H1 (cell line): ENCODE measurements at regions of chr13 and their contacts with region 1.

Region 1: DNA sequence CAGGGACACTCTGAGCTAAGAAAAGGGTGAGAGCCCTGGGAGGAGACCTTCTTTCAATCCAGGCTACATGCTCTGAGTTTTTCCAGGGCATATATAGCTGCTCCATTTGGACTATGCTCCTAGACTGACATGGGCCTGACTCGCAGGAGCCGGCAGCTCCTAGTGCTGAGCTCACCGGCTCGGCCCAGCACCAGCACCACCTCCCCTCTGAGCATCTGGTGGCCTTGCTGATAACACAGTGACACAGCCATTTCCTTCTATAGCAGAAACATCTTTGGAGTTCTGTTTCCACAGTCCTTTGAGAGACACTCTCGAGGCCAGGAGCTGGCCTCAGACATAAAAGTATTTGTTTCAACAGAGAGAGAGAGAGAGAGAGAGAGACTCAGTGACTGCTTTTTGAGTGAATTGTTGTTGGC is 184.9 kb downstream of the TM9SF2 start:
- DNase-seq: peak in 1 of 2 experiments; percentile 52
- H3K4me3 ChIP-seq: peak overlapping the region in 1 of 4 experiments; percentile 28; a peak in 1 of 8 replicates
- H3K27ac ChIP-seq: peak overlapping the region; percentile 56; the same call in 1 of the 2 replicates
- H3K4me1 ChIP-seq: peaks cover 17 to 41% (median 35%) of the 10 kb centered on the region in 4 experiments
- H3K27me3 ChIP-seq: no peaks in the 10 kb centered on the region
- CTCF ChIP-seq: no peak
- EP300 ChIP-seq: no peak
- POLR2A ChIP-seq: no peak
- RAD21 ChIP-seq: no peak

Region 2: DNA sequence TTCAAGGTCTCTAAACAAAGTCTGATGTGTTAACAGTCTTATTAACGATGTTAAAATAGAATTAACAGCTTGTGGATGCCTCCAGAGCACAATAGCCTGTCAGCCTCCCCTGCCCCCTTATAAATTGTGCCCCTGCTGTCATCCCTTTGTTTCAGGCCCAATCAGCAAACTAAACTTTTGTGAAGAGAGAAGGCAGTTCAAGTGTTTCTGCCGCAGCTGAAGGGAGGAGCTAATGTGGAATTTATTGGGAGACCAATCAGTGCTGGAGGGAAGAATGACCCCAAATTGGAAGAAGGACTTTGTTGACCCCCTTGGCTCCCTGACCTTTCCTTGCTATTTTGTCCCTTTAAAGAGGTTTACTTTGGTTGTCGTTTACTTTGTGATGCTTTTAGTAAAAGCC is 24.4 kb before region 1 on chr13:
- CTCF ChIA-PET with region 1: interaction called, 10 read pairs
- POLR2A ChIA-PET with region 1: interaction called, 63 read pairs
- DNase-seq: peak; percentile 67 to 75
- H3K4me3 ChIP-seq: peak overlapping the region in 1 of 4 experiments; percentile 31; a peak in 1 of 8 replicates
- H3K27ac ChIP-seq: no peak overlapping the region
- H3K4me1 ChIP-seq: peaks cover 17 to 36% (median 25%) of the 10 kb centered on the region in 4 experiments
- H3K27me3 ChIP-seq: no peaks in the 10 kb centered on the region
- CTCF ChIP-seq: no peak
- EP300 ChIP-seq: no peak
- POLR2A ChIP-seq: peak in 1 of 2 experiments; percentile 54; a peak in 2 of 3 replicates
- RAD21 ChIP-seq: peak; percentile 11 to 16; a peak in 2 of 4 replicates

Region 3: GRCh38 chr13:99702687-99703319 is 16.6 kb after region 1 on chr13:
- CTCF ChIA-PET with region 1: interaction called, 11 read pairs
- POLR2A ChIA-PET with region 1: interaction called, 229 read pairs
- DNase-seq: no peak
- H3K4me3 ChIP-seq: no peak overlapping the region
- H3K27ac ChIP-seq: peak overlapping the region; percentile 31; the same call in 1 of the 2 replicates
- H3K4me1 ChIP-seq: peaks cover 6 to 37% (median 14%) of the 10 kb centered on the region in 4 experiments
- H3K27me3 ChIP-seq: no peaks in the 10 kb centered on the region
- CTCF ChIP-seq: peak; percentile 25 to 42 (median 26); a peak in 3 of 4 replicates
- EP300 ChIP-seq: no peak
- POLR2A ChIP-seq: no peak
- RAD21 ChIP-seq: peak; percentile 52; a peak in 3 of 4 replicates

Region 4: DNA sequence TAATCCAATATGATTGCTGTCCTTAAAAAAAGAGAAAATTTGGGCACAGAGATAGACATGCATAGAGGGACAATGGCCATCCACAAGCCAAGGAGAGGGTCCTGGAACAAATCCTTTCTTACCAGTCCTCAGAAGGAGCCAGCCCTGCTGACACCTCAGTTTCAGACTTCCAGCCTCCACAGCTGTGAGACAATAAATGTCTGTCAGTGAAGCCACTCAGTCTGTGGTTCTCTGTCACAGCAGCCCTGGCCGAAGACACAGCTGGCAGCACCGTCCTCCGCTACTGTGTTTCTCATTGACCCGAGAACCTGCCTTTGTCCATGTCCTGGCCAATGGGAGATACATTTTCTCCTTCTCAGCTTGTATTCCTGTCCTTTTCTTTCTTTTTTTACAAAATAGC is 23.0 kb after region 1 on chr13:
- CTCF ChIA-PET with region 1: interaction called, 4 read pairs
- POLR2A ChIA-PET with region 1: interaction called, 229 read pairs
- DNase-seq: no peak
- H3K4me3 ChIP-seq: no peak overlapping the region
- H3K27ac ChIP-seq: no peak overlapping the region
- H3K4me1 ChIP-seq: peaks cover 4 to 26% (median 10%) of the 10 kb centered on the region in 4 experiments
- H3K27me3 ChIP-seq: no peaks in the 10 kb centered on the region
- CTCF ChIP-seq: no peak
- EP300 ChIP-seq: no peak
- POLR2A ChIP-seq: no peak
- RAD21 ChIP-seq: no peak

Region 5: DNA sequence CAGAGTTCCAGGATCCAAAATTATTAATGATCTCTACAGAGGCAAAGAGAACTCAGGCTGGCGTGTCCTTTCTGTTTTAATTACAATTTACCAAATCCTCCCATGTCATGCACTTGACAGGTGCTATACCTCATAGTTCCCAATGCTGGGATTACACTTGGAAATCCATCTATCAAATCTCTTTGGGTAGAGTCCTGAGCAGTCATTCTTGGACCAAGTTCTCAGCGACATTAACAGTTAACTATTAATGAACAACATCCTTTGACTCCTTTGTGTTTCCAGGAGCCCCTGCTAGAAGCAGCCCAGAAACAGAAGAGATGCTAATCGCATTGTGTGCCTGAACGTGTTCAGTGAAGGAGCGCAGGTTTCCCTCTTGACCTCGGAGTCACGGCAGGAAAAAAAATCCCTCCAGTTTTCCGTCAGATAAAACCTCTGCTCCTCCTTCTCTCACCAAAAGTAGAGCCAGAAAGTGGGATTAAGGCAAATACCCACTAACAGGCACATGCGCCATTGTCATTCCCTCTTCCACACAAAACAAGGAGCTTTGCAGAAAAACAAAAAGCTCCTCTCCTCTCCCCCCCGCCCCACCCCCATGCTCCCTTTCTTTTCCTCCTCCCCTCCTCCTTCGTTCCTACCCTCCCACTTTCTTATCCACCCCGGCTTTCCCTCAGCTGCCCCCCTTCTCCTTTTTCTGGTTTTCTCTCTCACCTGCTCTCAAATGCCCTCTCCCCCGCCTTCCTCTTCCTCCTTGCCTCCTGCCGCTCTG is 60.7 kb after region 1 on chr13:
- CTCF ChIA-PET with region 1: interaction called, 3 read pairs
- POLR2A ChIA-PET with region 1: interaction called, 32 read pairs
- DNase-seq: peak; percentile 31 to 65
- H3K4me3 ChIP-seq: peak overlapping the region in 3 of 4 experiments; percentile 8 to 50 (median 9); a peak in 5 of 8 replicates
- H3K27ac ChIP-seq: peak overlapping the region; percentile 91
- H3K4me1 ChIP-seq: peaks cover 12 to 39% (median 28%) of the 10 kb centered on the region in 4 experiments; a peak in 6 of 7 replicates
- H3K27me3 ChIP-seq: no peaks in the 10 kb centered on the region
- CTCF ChIP-seq: no peak
- EP300 ChIP-seq: no peak
- POLR2A ChIP-seq: peak; percentile 36 to 66; a peak in 2 of 3 replicates
- RAD21 ChIP-seq: no peak

Region 6: GRCh38 chr13:99916366-99917103 is 230.4 kb after region 1 on chr13:
- CTCF ChIA-PET with region 1: interaction called, 10 read pairs
- POLR2A ChIA-PET with region 1: no interaction called
- DNase-seq: no peak
- H3K4me3 ChIP-seq: no peak overlapping the region
- H3K27ac ChIP-seq: no peak overlapping the region
- H3K4me1 ChIP-seq: peaks cover 1 to 4% (median 2%) of the 10 kb centered on the region in 4 experiments; a peak in 5 of 7 replicates
- H3K27me3 ChIP-seq: no peaks in the 10 kb centered on the region
- CTCF ChIP-seq: peak in 2 of 3 experiments; percentile 96 to 100; a peak in 3 of 4 replicates
- EP300 ChIP-seq: no peak
- POLR2A ChIP-seq: no peak
- RAD21 ChIP-seq: peak; percentile 80 to 86